GM23248 (cell line): ENCODE measurements at regions of chr17 and their contacts with region 1.

Region 1: GRCh38 chr17:68972119-68972704 is 17.0 kb upstream of the ABCA8 start:
- DNase-seq: peak; percentile 68
- H3K4me3 ChIP-seq: no peak overlapping the region
- H3K27ac ChIP-seq: no peak overlapping the region
- H3K4me1 ChIP-seq: no peaks in the 10 kb centered on the region
- H3K27me3 ChIP-seq: no peaks in the 10 kb centered on the region

Region 2: GRCh38 chr17:68777243-68777855 is 194.9 kb before region 1 on chr17:
- in situ Hi-C with region 1: loop called (anchors 5 kb)
- DNase-seq: peak; percentile 77
- H3K4me3 ChIP-seq: no peak overlapping the region
- H3K27ac ChIP-seq: peak overlapping the region; percentile 21; the same call in 1 of the 2 replicates
- H3K4me1 ChIP-seq: peaks cover 31% of the 10 kb centered on the region
- H3K27me3 ChIP-seq: no peaks in the 10 kb centered on the region

Region 3: DNA sequence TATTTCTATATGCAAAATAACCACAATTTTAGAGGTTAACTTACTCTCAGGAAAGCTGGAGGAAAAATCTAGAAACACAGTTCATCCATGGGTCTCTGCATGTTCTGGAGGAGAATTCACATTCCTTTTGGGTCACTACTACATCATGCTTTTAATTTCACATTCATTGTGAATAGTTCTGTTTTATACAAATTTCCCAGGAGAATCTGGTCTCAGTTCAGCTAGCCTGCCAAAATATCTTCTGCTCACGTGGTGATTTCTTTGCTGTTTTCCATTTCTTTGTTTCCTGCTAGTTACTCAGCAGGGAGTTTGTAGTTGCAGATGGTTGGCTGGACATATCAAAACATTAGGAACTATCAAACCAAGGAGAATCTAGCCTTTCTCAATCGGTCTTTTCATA is 88.6 kb after region 1 on chr17 and contains the start of gene ABCA9:
- in situ Hi-C with region 1: no loop called
- DNase-seq: peak; percentile 93
- H3K4me3 ChIP-seq: peak within 1 kb of the TSS; percentile 47
- H3K27ac ChIP-seq: peak within 1 kb of the TSS; percentile 55
- H3K4me1 ChIP-seq: peaks cover 27% of the 10 kb centered on the region
- H3K27me3 ChIP-seq: no peaks in the 10 kb centered on the region
- total RNA-seq, gene ABCA9: 0.51 and 0.65 TPM in 2 replicates